PC-9 (cell line): ENCODE measurements at regions of chr1 and their contacts with region 1.

Region 1: DNA sequence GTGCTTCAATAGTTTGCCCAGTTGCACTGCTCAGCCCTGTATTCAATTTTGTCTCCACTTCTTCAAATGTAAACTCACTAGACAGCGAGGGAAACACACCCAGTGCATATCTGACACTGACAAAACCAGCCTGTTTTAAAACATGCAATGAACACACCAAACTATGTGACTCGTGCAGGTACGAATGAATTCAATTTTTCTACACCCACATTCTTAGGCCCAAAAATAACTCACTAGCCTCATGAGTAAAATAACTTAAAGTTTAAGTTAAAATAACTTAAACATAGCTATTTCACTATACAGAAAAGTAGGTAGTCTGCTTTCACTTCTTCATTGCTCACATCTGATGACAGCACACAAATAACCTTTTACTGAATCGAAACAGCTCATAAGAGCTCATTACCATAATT is 21.1 kb downstream of the TTC13 start:
- DNase-seq: no peak
- H3K4me3 ChIP-seq: no peak overlapping the region
- H3K27ac ChIP-seq: no peak overlapping the region
- H3K4me1 ChIP-seq: no peaks in the 10 kb centered on the region
- H3K27me3 ChIP-seq: no peaks in the 10 kb centered on the region
- CTCF ChIP-seq: no peak

Region 2: GRCh38 chr1:230681599-230681998 is 276.0 kb before region 1 on chr1:
- CTCF ChIA-PET with region 1: no interaction called
- POLR2A ChIA-PET with region 1: no interaction called
- intact Hi-C with region 1: no loop called
- DNase-seq: peak; percentile 69 to 84
- H3K4me3 ChIP-seq: no peak overlapping the region
- H3K27ac ChIP-seq: no peak overlapping the region
- H3K4me1 ChIP-seq: peaks cover 42% of the 10 kb centered on the region
- H3K27me3 ChIP-seq: no peaks in the 10 kb centered on the region
- CTCF ChIP-seq: no peak

Region 3: GRCh38 chr1:230825063-230825721 is 132.4 kb before region 1 on chr1:
- CTCF ChIA-PET with region 1: no interaction called
- POLR2A ChIA-PET with region 1: no interaction called
- intact Hi-C with region 1: no loop called
- DNase-seq: peak; percentile 46 to 95
- H3K4me3 ChIP-seq: peak overlapping the region; percentile 23; the same call in 1 of the 2 replicates
- H3K27ac ChIP-seq: peak overlapping the region; percentile 93
- H3K4me1 ChIP-seq: peaks cover 42% of the 10 kb centered on the region
- H3K27me3 ChIP-seq: no peaks in the 10 kb centered on the region
- CTCF ChIP-seq: no peak

Region 4: GRCh38 chr1:230940848-230941247 is 16.7 kb before region 1 on chr1:
- CTCF ChIA-PET with region 1: no interaction called
- POLR2A ChIA-PET with region 1: no interaction called
- intact Hi-C with region 1: loop called (anchors 2 kb)
- DNase-seq: no peak
- H3K4me3 ChIP-seq: no peak overlapping the region
- H3K27ac ChIP-seq: no peak overlapping the region
- H3K4me1 ChIP-seq: no peaks in the 10 kb centered on the region
- H3K27me3 ChIP-seq: no peaks in the 10 kb centered on the region
- CTCF ChIP-seq: no peak

Region 5: GRCh38 chr1:231028682-231029081 is 71.1 kb after region 1 on chr1:
- CTCF ChIA-PET with region 1: no interaction called
- POLR2A ChIA-PET with region 1: no interaction called
- intact Hi-C with region 1: no loop called
- DNase-seq: no peak
- H3K4me3 ChIP-seq: no peak overlapping the region
- H3K27ac ChIP-seq: no peak overlapping the region
- H3K4me1 ChIP-seq: no peaks in the 10 kb centered on the region
- H3K27me3 ChIP-seq: 0 out of 2 replicates have a peak, but pooled peaks cover 13% of the 10 kb centered on the region
- CTCF ChIP-seq: no peak

Region 6: GRCh38 chr1:231252341-231252740 is 294.8 kb after region 1 on chr1:
- CTCF ChIA-PET with region 1: no interaction called
- POLR2A ChIA-PET with region 1: no interaction called
- intact Hi-C with region 1: no loop called
- DNase-seq: no peak
- H3K4me3 ChIP-seq: no peak overlapping the region
- H3K27ac ChIP-seq: no peak overlapping the region
- H3K4me1 ChIP-seq: no peaks in the 10 kb centered on the region
- H3K27me3 ChIP-seq: no peaks in the 10 kb centered on the region
- CTCF ChIP-seq: no peak